A673 (cell line): ENCODE measurements at regions of chr1 and their contacts with region 1.

Region 1: DNA sequence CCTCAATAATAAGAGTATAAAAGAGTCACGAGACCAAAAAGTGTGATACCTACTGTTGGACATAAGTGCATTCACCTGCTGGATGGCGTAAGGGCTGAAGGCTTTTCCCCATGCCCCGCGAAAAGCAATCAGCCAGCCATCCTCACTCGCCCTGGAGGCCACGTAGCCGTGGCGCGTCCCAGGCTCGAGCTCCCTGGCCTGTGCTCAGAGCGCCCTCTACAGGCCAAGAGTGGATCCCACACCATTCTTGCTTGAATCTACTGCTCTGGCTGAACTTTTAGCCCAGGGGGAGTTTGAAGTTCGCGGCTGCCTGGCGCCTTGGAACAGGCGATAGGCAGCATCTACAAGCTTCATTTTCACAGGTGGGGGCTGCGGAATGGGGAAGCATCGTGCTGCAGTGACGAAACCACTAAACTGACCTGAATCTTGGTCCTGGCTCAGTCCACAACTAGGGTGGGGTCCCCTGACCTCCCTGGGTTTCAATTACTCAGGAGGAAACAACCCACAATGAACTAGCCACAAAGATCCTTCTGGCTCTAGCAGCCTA is 70.3 kb upstream of the SERBP1 start:
- DNase-seq: peak; percentile 93
- H3K4me3 ChIP-seq: no peak overlapping the region
- H3K27ac ChIP-seq: no peak overlapping the region
- H3K4me1 ChIP-seq: no peaks in the 10 kb centered on the region
- H3K27me3 ChIP-seq: no peaks in the 10 kb centered on the region
- CTCF ChIP-seq: peak; percentile 97

Region 2: DNA sequence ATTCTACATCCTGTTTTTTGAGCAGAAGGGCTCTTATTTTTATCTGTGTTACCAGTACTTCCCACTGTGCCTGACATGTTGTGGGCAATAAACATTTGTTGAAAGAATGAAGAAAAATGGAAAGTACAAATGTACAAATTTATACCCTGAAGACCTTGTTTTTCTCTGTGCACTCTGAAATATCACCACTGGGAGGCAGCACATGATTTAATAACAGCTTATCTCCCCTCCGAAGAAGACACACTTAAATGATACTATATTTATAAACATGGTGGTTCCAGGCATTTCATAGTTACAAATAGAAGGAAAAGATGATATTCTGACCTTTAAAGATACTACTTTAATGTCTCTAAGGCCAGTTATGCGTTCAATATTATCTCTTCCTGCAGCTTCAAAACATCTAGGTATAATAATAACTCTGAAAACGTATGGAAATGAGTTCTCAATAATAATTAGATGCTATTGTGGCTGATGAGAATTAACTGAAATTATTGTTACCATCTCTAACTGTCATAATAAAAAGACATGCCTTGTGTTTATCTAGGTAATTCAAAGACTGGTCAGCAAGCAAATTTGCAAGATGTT is 735.4 kb before region 1 on chr1:
- CTCF ChIA-PET with region 1: no interaction called
- POLR2A ChIA-PET with region 1: no interaction called
- intact Hi-C with region 1: loop called (anchors 5 kb)
- DNase-seq: peak; percentile 65
- H3K4me3 ChIP-seq: no peak overlapping the region
- H3K27ac ChIP-seq: no peak overlapping the region
- H3K4me1 ChIP-seq: no peaks in the 10 kb centered on the region
- H3K27me3 ChIP-seq: no peaks in the 10 kb centered on the region
- CTCF ChIP-seq: peak; percentile 81

Region 3: DNA sequence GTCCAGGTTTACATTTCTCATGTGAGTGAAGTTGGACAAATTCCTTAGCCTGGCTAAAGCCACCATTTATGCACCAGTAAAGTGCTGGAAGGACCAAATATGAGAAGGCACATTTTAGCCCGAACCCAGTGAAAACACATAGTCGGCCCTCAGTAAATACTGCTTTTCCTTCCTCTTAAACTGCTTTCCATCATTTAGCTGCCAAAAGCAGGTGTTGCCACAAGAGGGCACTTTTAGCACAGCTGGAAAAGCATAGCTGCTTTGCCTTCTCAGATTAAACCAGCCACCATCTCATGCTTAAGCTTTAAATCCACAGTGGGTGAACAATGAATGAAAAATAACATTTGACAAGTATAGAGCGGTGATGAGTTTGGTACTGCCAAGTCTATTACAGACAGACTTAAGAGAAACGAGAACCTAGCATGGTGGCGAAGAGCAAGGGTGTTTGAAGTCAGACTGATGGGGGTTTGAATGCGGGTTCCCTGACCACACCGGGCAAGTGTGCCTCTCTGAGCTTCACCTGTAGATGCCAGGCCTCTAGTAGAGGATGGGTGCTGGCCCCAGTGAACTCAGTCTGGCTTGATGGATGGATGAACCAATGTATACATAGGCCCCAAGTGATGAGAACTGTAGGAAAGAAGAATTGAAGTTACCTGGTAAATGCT is 504.3 kb before region 1 on chr1:
- CTCF ChIA-PET with region 1: no interaction called
- POLR2A ChIA-PET with region 1: no interaction called
- intact Hi-C with region 1: loop called (anchors 10 kb)
- DNase-seq: peak; percentile 81
- H3K4me3 ChIP-seq: no peak overlapping the region
- H3K27ac ChIP-seq: no peak overlapping the region
- H3K4me1 ChIP-seq: no peaks in the 10 kb centered on the region
- H3K27me3 ChIP-seq: no peaks in the 10 kb centered on the region
- CTCF ChIP-seq: peak; percentile 86

Region 4: DNA sequence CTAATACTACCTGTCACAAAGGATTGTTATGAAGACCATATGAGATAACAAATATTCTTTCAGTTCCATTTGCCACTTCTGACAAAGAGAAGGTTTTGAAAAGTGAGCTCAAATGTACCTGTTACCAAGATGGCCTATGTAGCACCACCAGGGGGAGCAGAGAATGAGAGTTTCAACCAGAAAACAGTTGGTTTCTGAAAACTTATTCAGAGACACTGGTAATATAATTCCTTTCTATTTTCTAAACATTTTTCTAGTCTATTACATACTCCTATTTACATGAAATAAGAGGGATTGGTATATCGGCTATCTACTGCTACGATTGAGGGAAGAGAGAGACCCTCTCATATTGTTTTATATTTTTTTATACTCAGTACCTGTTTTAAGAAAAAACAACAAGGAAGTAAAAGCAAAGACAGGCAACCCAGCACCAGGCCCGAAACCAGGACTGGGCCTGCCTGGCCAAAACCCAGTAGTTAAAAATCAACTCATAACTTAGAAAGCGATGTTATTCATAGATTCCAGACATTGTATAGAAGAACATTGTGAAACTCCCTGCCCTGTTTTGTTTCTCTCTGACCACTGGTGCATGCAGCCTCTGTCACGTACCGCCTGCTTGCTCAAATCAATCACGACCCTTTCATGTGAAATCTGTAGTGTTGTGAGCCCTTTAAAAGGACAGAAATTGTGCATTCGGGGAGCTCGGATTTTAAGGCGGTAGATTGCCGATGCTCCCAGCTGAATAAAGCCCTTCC is 285.9 kb before region 1 on chr1:
- CTCF ChIA-PET with region 1: interaction called, 23 read pairs
- POLR2A ChIA-PET with region 1: no interaction called
- intact Hi-C with region 1: loop called (anchors 5 kb)
- DNase-seq: peak; percentile 38
- H3K4me3 ChIP-seq: no peak overlapping the region
- H3K27ac ChIP-seq: no peak overlapping the region
- H3K4me1 ChIP-seq: no peaks in the 10 kb centered on the region
- H3K27me3 ChIP-seq: no peaks in the 10 kb centered on the region
- CTCF ChIP-seq: peak; percentile 68

Region 5: DNA sequence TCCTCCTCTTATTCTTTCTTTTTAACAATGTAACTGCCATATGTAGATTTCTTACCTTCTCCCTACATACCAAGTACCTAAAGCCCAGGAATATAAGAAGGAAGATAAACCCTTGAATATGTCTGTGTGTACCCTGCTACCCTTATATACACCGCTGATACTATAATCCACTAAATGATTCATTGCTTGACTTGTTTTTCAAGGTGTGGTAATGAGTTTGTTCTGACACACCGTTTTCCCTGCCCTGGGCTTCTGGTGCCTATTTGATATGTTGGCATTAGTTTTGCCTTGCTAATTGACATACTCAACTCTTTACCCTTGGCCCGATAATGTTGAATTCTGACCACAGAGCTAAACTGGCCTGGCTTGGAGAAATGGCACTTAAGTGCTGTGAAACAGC is 269.9 kb before region 1 on chr1:
- CTCF ChIA-PET with region 1: interaction called, 11 read pairs
- POLR2A ChIA-PET with region 1: no interaction called
- intact Hi-C with region 1: loop called (anchors 1 kb)
- DNase-seq: no peak
- H3K4me3 ChIP-seq: no peak overlapping the region
- H3K27ac ChIP-seq: no peak overlapping the region
- H3K4me1 ChIP-seq: no peaks in the 10 kb centered on the region
- H3K27me3 ChIP-seq: no peaks in the 10 kb centered on the region
- CTCF ChIP-seq: no peak

Region 6: GRCh38 chr1:67347688-67348472 is 152.6 kb before region 1 on chr1:
- CTCF ChIA-PET with region 1: interaction called, 9 read pairs
- POLR2A ChIA-PET with region 1: no interaction called
- intact Hi-C with region 1: loop called (anchors 1 kb)
- DNase-seq: peak; percentile 67
- H3K4me3 ChIP-seq: no peak overlapping the region
- H3K27ac ChIP-seq: no peak overlapping the region
- H3K4me1 ChIP-seq: no peaks in the 10 kb centered on the region
- H3K27me3 ChIP-seq: no peaks in the 10 kb centered on the region
- CTCF ChIP-seq: peak; percentile 81

Region 7: GRCh38 chr1:67414574-67414973 is 85.9 kb before region 1 on chr1:
- CTCF ChIA-PET with region 1: no interaction called
- POLR2A ChIA-PET with region 1: no interaction called
- intact Hi-C with region 1: no loop called
- DNase-seq: no peak
- H3K4me3 ChIP-seq: no peak overlapping the region
- H3K27ac ChIP-seq: no peak overlapping the region
- H3K4me1 ChIP-seq: no peaks in the 10 kb centered on the region
- H3K27me3 ChIP-seq: no peaks in the 10 kb centered on the region
- CTCF ChIP-seq: no peak

Region 8: DNA sequence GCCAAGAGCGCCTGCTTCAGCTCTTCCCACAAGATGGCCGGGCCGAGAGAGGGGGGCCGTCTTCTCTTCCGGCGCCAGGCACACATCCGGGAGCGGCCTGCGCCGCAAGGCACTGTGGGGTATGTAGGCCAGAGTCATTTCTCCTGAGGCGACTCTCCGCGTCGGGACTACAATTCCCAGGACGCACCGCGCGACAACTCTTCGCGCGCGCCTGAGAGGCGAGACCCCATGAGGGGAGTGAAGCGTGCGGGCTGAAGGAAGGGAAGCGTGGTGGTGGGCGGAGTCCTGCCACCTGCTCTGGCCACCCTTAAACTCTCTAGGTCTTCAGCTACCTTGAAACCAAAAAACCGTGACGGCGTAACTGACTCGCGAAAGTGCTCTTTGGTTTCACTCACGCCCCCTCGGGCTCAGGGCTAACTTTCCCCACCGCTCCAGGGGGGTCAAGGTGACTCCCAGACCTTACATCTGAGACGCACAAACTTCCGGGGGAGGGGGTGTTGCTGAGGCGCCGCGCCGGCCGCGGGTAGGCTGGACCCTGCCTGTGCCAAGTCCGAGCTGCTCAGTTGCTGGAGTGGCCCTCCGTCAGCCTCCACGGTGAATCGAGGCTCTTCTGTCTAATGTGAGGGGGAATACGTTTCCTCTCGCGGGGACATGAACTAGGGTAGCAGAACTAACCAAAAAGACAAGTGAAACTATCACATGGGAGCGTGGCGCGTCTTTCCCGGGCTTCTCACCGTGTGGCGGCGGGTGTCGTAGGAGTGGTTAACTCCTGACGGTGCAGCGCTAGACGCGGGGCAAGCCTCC is 69.9 kb before region 1 on chr1 and contains the start of gene SERBP1:
- CTCF ChIA-PET with region 1: no interaction called
- POLR2A ChIA-PET with region 1: no interaction called
- intact Hi-C with region 1: loop called (anchors 5 kb)
- DNase-seq: peak; percentile 99
- H3K4me3 ChIP-seq: peak within 1 kb of the TSS; percentile 75
- H3K27ac ChIP-seq: peak within 1 kb of the TSS; percentile 91
- H3K4me1 ChIP-seq: peaks cover 19% of the 10 kb centered on the region
- H3K27me3 ChIP-seq: no peaks in the 10 kb centered on the region
- CTCF ChIP-seq: no peak
- total RNA-seq, gene SERBP1: 407 and 447 TPM in 2 replicates

Region 9: DNA sequence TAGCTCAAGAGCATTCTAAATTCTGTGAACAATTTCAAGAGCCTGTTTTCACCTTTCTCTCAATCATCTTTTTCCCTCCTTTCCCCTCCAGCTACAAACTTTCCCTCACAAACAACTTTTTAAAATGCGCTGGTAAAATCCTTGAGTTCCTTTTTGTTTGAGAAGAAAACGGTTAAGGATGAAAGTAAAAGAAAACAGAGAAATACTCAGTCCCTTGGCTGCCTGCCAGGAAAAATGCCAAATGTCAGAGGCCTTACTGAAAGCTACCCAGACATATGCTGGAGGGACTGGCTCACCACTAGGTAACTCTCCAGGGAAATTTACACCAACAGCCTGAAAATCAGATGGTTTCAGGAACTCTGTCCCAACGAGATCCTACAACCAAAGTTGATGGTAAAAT is 59.3 kb before region 1 on chr1:
- CTCF ChIA-PET with region 1: no interaction called
- POLR2A ChIA-PET with region 1: no interaction called
- intact Hi-C with region 1: no loop called
- DNase-seq: no peak
- H3K4me3 ChIP-seq: no peak overlapping the region
- H3K27ac ChIP-seq: no peak overlapping the region
- H3K4me1 ChIP-seq: no peaks in the 10 kb centered on the region
- H3K27me3 ChIP-seq: no peaks in the 10 kb centered on the region
- CTCF ChIP-seq: no peak